Heart left ventricle (tissue), 16 donors: ENCODE measurements at regions of chr11 and their contacts with region 1.

Region 1: DNA sequence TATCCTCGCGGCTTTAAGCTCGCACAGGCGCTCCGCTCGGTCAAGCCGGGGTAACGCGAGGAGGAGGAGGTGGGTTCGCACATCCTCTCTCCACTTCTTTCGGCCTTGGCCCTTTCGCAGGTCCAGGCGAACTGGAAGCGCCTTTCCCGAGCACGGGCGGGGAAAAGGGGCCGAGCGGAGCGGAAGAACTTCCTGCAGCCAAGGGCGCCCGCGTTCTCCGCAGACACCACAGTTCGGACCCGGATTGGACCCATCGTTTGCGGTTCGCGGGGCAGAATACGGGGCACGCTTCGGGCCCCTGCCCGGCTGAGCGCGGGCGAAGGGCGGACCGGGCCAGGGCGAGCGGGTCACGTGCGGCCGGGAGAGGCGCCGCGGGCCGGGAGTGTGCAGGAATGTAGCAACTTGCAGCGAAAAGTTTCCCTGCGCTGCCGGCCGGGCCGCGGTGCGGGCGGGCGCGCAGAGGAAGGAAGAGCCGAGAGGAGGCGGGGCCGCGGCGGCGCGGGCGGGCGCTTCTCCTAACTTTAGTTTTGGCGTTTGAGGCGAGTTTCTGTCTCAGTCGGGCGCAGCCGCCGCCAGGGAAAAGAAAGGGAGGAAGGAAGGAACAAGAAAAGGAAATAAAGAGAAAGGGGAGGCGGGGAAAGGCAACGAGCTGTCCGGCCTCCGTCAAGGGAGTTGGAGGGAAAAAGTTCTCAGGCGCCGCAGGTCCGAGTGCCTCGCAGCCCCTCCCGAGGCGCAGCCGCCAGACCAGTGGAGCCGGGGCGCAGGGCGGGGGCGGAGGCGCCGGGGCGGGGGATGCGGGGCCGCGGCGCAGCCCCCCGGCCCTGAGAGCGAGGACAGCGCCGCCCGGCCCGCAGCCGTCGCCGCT is at the start of gene YAP1:
- DNase-seq: peak; percentile 89 to 93 (median 92)
- ATAC-seq: peak; percentile 75 to 94 (median 86)
- H3K4me3 ChIP-seq: peak within 1 kb of the TSS; percentile 66 to 98 (median 84)
- H3K27ac ChIP-seq: peak within 1 kb of the TSS; percentile 88 to 98 (median 96)
- H3K4me1 ChIP-seq: peaks cover 0 to 35% (median 21%) of the 10 kb centered on the region in 12 donors
- H3K27me3 ChIP-seq: peaks cover 0 to 50% (median 0%) of the 10 kb centered on the region in 9 donors
- CTCF ChIP-seq: peak in 1 of 12 donors; percentile 13
- POLR2A ChIP-seq: peak in 1 of 2 donors; percentile 57
- total RNA-seq, gene YAP1: 45.6 to 93.0 (median 80.6) TPM

Region 2: GRCh38 chr11:101914738-101915426 is 195.2 kb before region 1 on chr11 and contains the start of gene CEP126:
- intact Hi-C with region 1: loop called in 1 of 10 experiments (anchors 10 kb)
- DNase-seq: peak; percentile 93 to 97 (median 95)
- ATAC-seq: peak; percentile 93 to 99 (median 98)
- H3K4me3 ChIP-seq: peak within 1 kb of the TSS; percentile 48 to 82 (median 72)
- H3K27ac ChIP-seq: peak within 1 kb of the TSS; percentile 52 to 86 (median 74)
- H3K4me1 ChIP-seq: peaks cover 0 to 27% (median 7%) of the 10 kb centered on the region in 12 donors
- H3K27me3 ChIP-seq: no peaks in the 10 kb centered on the region
- CTCF ChIP-seq: peak; percentile 15 to 75 (median 40)
- POLR2A ChIP-seq: peak in 1 of 2 donors; percentile 17
- total RNA-seq, gene CEP126: 0.82 to 1.8 (median 1.1) TPM

Region 3: DNA sequence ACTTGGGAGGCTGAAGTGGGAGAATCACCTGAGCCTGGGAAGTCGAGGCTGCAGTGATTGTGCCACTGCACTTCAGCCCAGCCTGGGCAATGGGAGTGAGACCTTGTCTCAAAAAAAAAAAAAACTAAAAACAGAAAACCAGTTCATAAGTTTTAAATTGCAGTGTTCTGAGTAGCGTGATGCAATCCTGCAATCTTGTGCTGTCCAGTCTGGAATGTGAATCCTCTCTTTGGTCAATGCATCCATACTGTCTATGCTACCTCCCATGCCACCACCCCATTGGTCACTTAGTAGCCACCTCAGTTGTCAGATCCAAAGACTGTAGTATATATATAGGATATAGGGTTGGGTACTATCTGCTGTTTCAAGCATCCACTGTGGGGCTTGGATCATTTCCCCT is 11.2 kb after region 1 on chr11:
- intact Hi-C with region 1: no loop called
- DNase-seq: no peak
- ATAC-seq: no peak
- H3K4me3 ChIP-seq: no peak overlapping the region
- H3K27ac ChIP-seq: no peak overlapping the region
- H3K4me1 ChIP-seq: peaks cover 0 to 52% (median 29%) of the 10 kb centered on the region in 12 donors
- H3K27me3 ChIP-seq: peaks cover 0 to 15% (median 0%) of the 10 kb centered on the region in 9 donors
- CTCF ChIP-seq: no peak
- POLR2A ChIP-seq: no peak

Region 4: DNA sequence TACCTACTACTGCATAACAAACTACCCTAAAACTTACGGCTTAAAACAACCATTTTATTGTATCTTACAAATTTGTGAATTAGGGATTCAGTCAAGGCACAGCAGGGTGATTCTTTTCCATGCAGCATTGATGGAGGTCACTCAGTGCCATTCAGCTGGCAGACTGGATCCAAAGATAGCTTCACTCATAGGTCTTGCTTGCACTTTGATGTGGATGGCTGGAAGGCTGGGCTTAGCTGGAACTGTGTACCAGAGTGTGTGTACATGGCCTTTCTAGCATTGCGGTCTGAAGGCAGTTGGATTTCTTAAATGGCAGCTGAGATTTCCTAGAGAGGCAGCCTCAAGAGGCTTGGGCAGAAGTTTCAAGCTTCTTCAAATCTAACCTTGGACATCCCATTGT is 25.1 kb after region 1 on chr11:
- intact Hi-C with region 1: no loop called
- DNase-seq: no peak
- ATAC-seq: peak in 2 of 4 donors; percentile 43 to 79
- H3K4me3 ChIP-seq: no peak overlapping the region
- H3K27ac ChIP-seq: no peak overlapping the region
- H3K4me1 ChIP-seq: peaks cover 0 to 27% (median 16%) of the 10 kb centered on the region in 12 donors
- H3K27me3 ChIP-seq: no peaks in the 10 kb centered on the region
- CTCF ChIP-seq: no peak
- POLR2A ChIP-seq: no peak

Region 5: GRCh38 chr11:102157219-102157618 is 47.1 kb after region 1 on chr11:
- intact Hi-C with region 1: loop called in 2 of 10 experiments (anchors 5 kb)
- DNase-seq: peak in 4 of 5 donors; percentile 64 to 76 (median 71)
- ATAC-seq: peak; percentile 92 to 96 (median 94)
- H3K4me3 ChIP-seq: no peak overlapping the region
- H3K27ac ChIP-seq: peak overlapping the region in 8 of 12 donors; percentile 21 to 63 (median 50)
- H3K4me1 ChIP-seq: peaks cover 0 to 66% (median 31%) of the 10 kb centered on the region in 12 donors
- H3K27me3 ChIP-seq: no peaks in the 10 kb centered on the region
- CTCF ChIP-seq: no peak
- POLR2A ChIP-seq: no peak

Region 6: DNA sequence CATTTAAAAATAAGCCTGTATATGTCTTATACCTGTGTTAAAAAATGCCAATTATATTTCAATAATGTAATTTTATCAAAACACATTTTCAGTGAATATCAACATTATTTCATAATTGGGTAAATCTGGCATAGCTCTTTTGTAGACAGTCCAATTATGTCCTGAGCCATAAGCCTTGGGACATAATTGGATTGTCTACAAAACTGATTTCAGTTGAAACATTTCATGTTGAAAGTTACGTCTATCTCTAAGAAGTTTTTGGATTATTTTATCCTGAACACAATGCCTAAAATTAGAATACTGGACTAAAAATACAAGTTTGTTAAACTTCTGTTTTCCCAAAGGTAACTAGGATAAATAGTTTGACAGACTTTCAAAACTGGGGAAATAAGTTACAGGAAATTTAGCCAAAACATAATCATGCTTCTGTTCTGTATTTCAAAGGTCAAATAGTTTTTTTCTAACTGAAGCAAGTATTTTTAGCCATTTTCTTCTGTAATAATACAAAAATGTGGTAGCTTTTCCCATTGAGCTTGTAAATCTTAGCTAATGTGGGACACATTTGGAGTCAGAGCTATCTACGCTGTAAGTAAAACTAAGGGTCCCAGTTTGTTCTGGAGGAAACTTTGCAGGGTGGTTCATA is 106.4 kb after region 1 on chr11:
- intact Hi-C with region 1: loop called in 4 of 10 experiments (anchors 5 to 10 kb)
- DNase-seq: no peak
- ATAC-seq: peak in 2 of 4 donors; percentile 49 to 58
- H3K4me3 ChIP-seq: no peak overlapping the region
- H3K27ac ChIP-seq: peak overlapping the region in 8 of 12 donors; percentile 11 to 76 (median 40)
- H3K4me1 ChIP-seq: peaks cover 0 to 40% (median 20%) of the 10 kb centered on the region in 12 donors
- H3K27me3 ChIP-seq: no peaks in the 10 kb centered on the region
- CTCF ChIP-seq: no peak
- POLR2A ChIP-seq: no peak

Region 7: GRCh38 chr11:102268329-102269193 is 158.4 kb after region 1 on chr11:
- intact Hi-C with region 1: loop called in 6 of 10 experiments (anchors 1 to 5 kb)
- DNase-seq: peak; percentile 68 to 84 (median 76)
- ATAC-seq: peak; percentile 83 to 98 (median 98)
- H3K4me3 ChIP-seq: peak overlapping the region; percentile 4 to 60 (median 49)
- H3K27ac ChIP-seq: peak overlapping the region in 3 of 12 donors; percentile 5 to 44 (median 24)
- H3K4me1 ChIP-seq: peaks cover 0 to 20% (median 9%) of the 10 kb centered on the region in 12 donors
- H3K27me3 ChIP-seq: peaks cover 0 to 32% (median 0%) of the 10 kb centered on the region in 9 donors
- CTCF ChIP-seq: peak; percentile 35 to 75 (median 51)
- POLR2A ChIP-seq: no peak

Region 8: GRCh38 chr11:102346748-102347461 is 236.8 kb after region 1 on chr11 and contains the start of gene BIRC2:
- intact Hi-C with region 1: loop called in 1 of 10 experiments (anchors 2 kb)
- DNase-seq: peak; percentile 95 to 98 (median 96)
- ATAC-seq: peak; percentile 91 to 98 (median 98)
- H3K4me3 ChIP-seq: peak within 1 kb of the TSS; percentile 56 to 94 (median 87)
- H3K27ac ChIP-seq: peak within 1 kb of the TSS; percentile 95 to 100 (median 98)
- H3K4me1 ChIP-seq: peaks cover 0 to 38% (median 30%) of the 10 kb centered on the region in 12 donors
- H3K27me3 ChIP-seq: no peaks in the 10 kb centered on the region
- CTCF ChIP-seq: peak; percentile 64 to 88 (median 76)
- POLR2A ChIP-seq: peak; percentile 54 to 79
- total RNA-seq, gene BIRC2: 24.1 to 39.9 (median 32.7) TPM